Activated naive CD4-positive, alpha-beta T cell treated with anti-CD3 and anti-CD28 coated beads for 36 hours (primary cell): ENCODE measurements at regions of chr12 and their contacts with region 1.

Region 1: DNA sequence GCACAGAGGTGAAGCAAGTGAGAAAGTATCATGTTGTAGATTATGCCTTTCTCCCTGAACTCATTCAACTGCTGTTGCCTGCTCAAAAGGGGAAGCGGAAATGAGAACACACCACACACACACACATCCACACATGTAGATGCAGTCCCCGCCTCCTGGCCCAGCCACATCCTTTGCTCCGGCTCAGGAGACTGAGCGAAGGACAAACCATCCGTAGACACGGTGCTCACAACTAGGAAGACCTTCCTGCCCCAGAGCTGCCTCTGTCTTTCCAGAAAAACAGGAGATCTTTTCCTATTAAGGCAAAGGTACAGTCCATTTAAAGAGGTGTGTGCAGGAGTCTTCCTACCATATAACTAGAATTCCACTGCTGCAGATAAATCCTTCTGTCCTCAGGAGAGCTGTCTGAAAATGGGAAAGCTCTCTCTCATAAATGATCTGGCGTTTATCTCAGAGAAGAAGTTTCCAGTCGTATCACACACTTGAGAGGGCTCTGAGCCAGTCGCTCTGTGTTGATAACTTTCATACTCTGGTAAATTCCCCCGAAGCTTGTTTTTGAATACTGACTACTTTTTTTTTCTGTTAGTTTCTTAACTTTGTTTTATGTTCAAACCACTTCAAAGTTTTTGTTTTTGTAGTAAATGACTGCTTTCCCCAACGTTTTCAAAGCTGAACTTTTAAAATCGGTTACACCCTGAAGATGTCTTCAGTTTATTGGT is at the start of gene TESPA1:
- DNase-seq: peak; percentile 94
- H3K4me3 Mint-ChIP-seq: peak within 1 kb of the TSS; percentile 75
- H3K27ac Mint-ChIP-seq: peak within 1 kb of the TSS; percentile 89
- H3K4me1 Mint-ChIP-seq: peaks cover 56% of the 10 kb centered on the region
- H3K27me3 Mint-ChIP-seq: no peaks in the 10 kb centered on the region
- total RNA-seq, gene TESPA1: 43.9 to 45.1 TPM

Region 2: DNA sequence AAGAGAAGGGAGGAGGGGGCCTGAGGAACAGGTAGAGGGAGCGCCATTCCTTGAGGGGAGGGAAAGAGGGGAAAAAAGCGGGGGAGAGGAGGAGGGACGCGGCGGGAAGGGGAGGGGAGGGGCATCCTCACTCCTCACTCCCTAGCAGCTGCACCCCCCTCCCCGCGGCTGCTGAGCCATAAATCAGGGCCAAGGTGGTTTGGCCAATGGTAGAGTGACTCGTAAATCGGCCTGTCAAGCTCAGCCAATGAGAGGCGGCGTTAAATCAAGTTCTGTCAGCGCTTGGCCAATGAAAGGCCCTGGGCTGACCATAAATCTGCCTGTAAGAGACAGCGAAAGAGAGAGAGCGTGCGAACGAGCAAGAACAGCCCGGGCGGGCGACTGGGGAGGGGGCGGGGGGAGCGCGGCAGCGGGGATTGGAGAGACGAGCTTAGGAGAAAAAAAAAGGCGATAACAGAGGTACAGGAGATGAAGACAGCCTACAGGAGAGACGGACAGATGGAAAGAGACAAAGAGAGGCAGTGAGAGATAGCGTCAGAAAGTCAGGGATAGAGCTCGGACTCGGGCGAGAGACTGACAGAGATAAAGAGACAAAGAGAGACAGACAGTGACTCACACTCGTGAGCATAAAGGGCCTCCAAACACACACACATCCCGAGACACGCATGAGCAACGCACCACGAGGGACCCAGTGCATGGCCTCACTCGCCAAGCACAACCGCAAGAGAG is 625.6 kb before region 1 on chr12:
- CTCF ChIA-PET with region 1: no interaction called
- intact Hi-C with region 1: loop called (anchors 1 kb)
- DNase-seq: peak; percentile 98
- H3K4me3 Mint-ChIP-seq: no peak overlapping the region
- H3K27ac Mint-ChIP-seq: no peak overlapping the region
- H3K4me1 Mint-ChIP-seq: peaks cover 19% of the 10 kb centered on the region
- H3K27me3 Mint-ChIP-seq: no peaks in the 10 kb centered on the region

Region 3: GRCh38 chr12:54497883-54498282 is 486.9 kb before region 1 on chr12:
- CTCF ChIA-PET with region 1: no interaction called
- intact Hi-C with region 1: loop called (anchors 2 kb)
- DNase-seq: no peak
- H3K4me3 Mint-ChIP-seq: peak overlapping the region; percentile 95
- H3K27ac Mint-ChIP-seq: peak overlapping the region; percentile 97
- H3K4me1 Mint-ChIP-seq: peaks cover 36% of the 10 kb centered on the region
- H3K27me3 Mint-ChIP-seq: no peaks in the 10 kb centered on the region

Region 4: GRCh38 chr12:54560374-54560858 is 424.4 kb before region 1 on chr12:
- CTCF ChIA-PET with region 1: no interaction called
- intact Hi-C with region 1: loop called (anchors 2 kb)
- DNase-seq: peak; percentile 97
- H3K4me3 Mint-ChIP-seq: peak overlapping the region; percentile 72
- H3K27ac Mint-ChIP-seq: peak overlapping the region; percentile 80
- H3K4me1 Mint-ChIP-seq: peaks cover 31% of the 10 kb centered on the region
- H3K27me3 Mint-ChIP-seq: peaks cover 3% of the 10 kb centered on the region

Region 5: DNA sequence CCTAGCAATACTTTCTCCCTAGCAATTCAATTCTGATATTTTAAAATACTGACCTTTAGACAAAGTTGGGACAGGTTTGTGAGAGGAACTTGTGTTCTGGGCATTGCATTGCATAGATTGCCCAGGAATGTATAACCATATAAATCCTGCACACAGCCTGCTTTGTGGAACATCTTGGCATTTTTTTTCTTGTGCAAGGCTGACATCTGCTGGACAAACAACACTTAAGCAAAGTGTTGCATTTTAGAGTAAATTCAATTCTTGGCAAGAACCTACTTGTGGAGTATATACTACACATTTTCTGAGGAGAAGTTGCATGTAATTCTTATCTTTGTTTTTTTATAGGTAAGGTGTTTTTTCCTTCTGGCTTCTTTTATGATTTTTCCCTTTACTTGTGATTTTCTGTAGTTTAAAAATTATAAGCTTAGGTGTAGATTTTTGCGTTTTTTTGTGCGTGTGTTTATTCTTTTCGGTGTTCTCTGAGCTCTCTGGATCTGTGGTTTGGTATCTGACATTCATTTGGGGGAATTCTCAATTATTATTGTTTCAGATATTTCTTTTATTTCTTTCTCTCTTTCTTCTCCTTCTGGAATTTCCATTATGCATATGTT is 26.7 kb before region 1 on chr12:
- CTCF ChIA-PET with region 1: interaction called, 11 read pairs
- intact Hi-C with region 1: loop called (anchors 2 kb)
- DNase-seq: peak; percentile 75
- H3K4me3 Mint-ChIP-seq: no peak overlapping the region
- H3K27ac Mint-ChIP-seq: peak overlapping the region; percentile 76
- H3K4me1 Mint-ChIP-seq: peaks cover 88% of the 10 kb centered on the region
- H3K27me3 Mint-ChIP-seq: no peaks in the 10 kb centered on the region

Region 6: GRCh38 chr12:55652352-55652751 is 667.5 kb after region 1 on chr12:
- CTCF ChIA-PET with region 1: no interaction called
- intact Hi-C with region 1: loop called (anchors 5 kb)
- DNase-seq: peak; percentile 61
- H3K4me3 Mint-ChIP-seq: no peak overlapping the region
- H3K27ac Mint-ChIP-seq: no peak overlapping the region
- H3K4me1 Mint-ChIP-seq: peaks cover 26% of the 10 kb centered on the region
- H3K27me3 Mint-ChIP-seq: no peaks in the 10 kb centered on the region

Region 7: DNA sequence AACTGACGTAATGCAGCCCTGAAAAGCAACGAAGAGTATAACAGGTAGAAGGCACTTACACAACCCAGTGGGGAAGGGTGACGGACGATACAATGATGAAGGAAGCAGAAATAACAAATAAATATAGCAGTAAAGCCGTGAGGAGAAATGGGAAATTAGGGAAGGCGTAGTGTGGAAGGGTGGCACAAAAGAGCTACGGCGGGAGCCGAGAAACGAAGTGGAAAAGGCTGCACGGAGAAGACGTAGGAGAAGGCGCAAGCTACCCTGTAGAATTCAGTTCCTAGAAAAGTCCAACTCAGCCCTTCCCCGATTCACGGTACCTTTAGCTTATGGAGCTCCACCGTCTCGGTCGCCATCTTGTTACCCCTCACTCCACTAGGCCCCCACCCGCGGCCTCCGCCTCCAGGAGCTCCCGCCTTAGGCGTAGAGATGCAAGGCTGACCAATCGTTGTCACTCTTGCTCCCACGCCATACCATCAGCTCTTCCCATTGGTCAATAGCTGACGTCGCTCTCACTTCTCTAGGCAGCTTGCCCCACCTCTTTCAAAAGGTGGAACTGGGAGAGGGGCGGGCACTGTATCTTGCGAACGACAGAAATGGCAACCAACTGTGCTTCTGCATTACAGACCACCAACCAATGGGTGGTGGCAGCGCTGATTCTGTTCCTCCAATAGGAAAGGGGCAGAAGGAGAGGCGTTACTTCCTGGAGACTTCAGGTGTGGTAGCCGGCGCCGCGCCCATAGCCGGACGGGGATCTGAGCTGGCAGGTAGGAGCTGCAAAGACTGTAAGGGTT is 832.7 kb after region 1 on chr12 and contains the starts of genes ORMDL2 and SARNP:
- CTCF ChIA-PET with region 1: no interaction called
- intact Hi-C with region 1: loop called (anchors 5 kb)
- DNase-seq: peak; percentile 99
- H3K4me3 Mint-ChIP-seq: no peak within 1 kb of the TSS
- H3K27ac Mint-ChIP-seq: no peak within 1 kb of the TSS
- H3K4me1 Mint-ChIP-seq: peaks cover 43% of the 10 kb centered on the region
- H3K27me3 Mint-ChIP-seq: no peaks in the 10 kb centered on the region
- total RNA-seq, gene ORMDL2: 23.8 to 26.4 TPM
- total RNA-seq, gene SARNP: 100 to 101 TPM